CD8-positive, alpha-beta memory T cell (primary cell): ENCODE measurements at regions of chr7 and their contacts with region 1.

Region 1: GRCh38 chr7:25186436-25186835 is 41.9 kb downstream of the NPVF start:
- DNase-seq: no peak
- H3K4me3 ChIP-seq: no peak overlapping the region
- H3K4me3 Mint-ChIP-seq: no peak overlapping the region
- H3K27ac ChIP-seq: no peak overlapping the region
- H3K27ac Mint-ChIP-seq: no peak overlapping the region
- H3K4me1 ChIP-seq: no peaks in the 10 kb centered on the region
- H3K4me1 Mint-ChIP-seq: peaks cover 0 to 1% (median under 1%) of the 10 kb centered on the region in 3 donors
- H3K27me3 ChIP-seq: no peaks in the 10 kb centered on the region
- H3K27me3 Mint-ChIP-seq: peaks cover 4 to 49% of the 10 kb centered on the region in 2 donors

Region 2: DNA sequence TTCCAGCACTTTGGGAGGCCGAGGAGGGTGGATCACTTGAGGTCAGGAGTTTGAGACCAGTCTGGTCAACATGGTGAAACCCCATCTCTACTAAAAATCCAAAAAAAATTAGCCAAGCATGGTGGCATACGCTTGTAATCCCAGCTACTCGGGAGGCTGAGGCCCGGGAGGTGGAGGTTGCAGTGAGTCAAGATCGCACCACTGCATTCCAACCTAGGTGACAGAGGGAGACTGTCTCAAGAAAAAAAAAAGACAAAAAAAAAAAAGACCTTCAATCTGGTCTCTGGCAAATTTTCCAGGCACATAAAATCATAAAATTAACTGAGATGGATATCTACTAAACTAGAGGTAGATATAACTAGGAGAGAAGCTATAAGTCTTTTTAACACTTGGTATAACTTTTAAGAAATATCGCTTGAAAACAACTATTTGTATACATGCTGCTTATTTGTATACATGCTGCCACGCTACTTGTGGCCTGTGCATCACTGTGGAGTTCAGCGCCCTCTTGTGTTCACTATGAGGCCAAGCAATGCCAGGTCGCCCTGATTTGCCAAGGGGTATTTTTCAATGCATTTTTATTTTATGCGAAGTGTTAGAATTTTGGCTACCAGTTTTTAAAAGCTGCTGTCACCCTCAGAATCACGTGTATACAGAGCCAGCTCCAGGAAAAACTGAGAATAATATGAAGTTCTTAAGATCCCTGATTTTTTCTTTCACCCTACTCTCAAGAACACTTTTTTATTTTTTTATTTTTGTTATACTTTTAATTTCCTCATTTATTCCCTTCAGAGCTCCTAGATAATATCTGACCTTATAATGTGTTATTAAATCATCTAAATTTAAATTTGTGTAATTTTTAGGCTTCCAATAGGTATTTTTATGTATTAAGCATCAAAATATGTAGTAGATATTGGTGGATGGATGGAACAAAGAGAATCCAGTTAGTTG is 88.1 kb before region 1 on chr7:
- CTCF ChIA-PET with region 1: no interaction called
- POLR2A ChIA-PET with region 1: no interaction called
- DNase-seq: peak; percentile 39 to 73 (median 42)
- H3K4me3 ChIP-seq: no peak overlapping the region
- H3K4me3 Mint-ChIP-seq: no peak overlapping the region
- H3K27ac ChIP-seq: no peak overlapping the region
- H3K27ac Mint-ChIP-seq: no peak overlapping the region
- H3K4me1 ChIP-seq: no peaks in the 10 kb centered on the region
- H3K4me1 Mint-ChIP-seq: peaks cover 4 to 8% (median 6%) of the 10 kb centered on the region in 3 donors
- H3K27me3 ChIP-seq: peaks cover 3% of the 10 kb centered on the region
- H3K27me3 Mint-ChIP-seq: peaks cover 1 to 4% of the 10 kb centered on the region in 2 donors

Region 3: DNA sequence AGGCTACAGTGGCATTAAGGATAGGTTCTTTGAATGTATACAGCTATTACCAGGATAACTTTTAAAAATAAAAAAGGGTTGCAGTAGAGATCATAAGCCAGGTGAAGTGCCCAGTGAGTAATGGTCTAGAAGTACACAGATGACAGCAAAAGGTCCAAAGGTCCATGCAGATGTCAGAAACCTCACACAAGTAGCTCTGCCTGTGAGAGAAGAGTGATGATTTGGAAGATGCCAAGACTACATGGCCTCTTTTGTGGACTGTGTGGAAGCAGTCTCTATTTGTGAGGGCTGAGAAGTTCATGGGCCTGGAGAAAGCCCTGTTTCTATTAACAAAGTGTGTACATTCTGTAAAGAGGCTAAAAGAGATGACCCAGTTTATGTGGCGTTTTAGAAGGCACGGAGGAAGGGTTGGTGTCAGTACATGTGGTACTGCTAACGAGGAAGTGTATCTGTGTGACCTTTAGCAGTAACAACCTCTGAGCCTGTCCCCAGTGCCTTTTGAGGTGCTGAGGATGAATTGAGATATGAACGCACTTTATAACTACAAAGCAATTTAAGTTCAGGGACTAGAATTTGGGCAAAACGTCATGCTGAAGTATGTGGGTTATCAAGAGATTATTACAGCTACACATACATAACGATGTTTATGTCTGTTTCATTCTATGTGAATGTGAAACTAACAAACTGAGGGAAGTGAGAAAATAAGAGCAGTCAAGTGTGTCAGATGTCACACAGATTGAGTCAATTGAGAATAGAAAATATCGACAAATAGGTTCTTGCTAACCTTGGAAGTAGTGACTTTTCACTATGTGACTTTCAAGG is 69.0 kb before region 1 on chr7:
- CTCF ChIA-PET with region 1: no interaction called
- POLR2A ChIA-PET with region 1: interaction called, 11 read pairs
- DNase-seq: peak in 1 of 5 donors; percentile 27
- H3K4me3 ChIP-seq: no peak overlapping the region
- H3K4me3 Mint-ChIP-seq: peak overlapping the region; percentile 15 to 75 (median 60)
- H3K27ac ChIP-seq: no peak overlapping the region
- H3K27ac Mint-ChIP-seq: peak overlapping the region; percentile 14 to 93 (median 84)
- H3K4me1 ChIP-seq: peaks cover 7% of the 10 kb centered on the region
- H3K4me1 Mint-ChIP-seq: peaks cover 23 to 35% (median 32%) of the 10 kb centered on the region in 3 donors
- H3K27me3 ChIP-seq: no peaks in the 10 kb centered on the region
- H3K27me3 Mint-ChIP-seq: no peaks in the 10 kb centered on the region

Region 4: GRCh38 chr7:25171071-25171470 is 15.4 kb before region 1 on chr7:
- CTCF ChIA-PET with region 1: no interaction called
- POLR2A ChIA-PET with region 1: no interaction called
- DNase-seq: no peak
- H3K4me3 ChIP-seq: no peak overlapping the region
- H3K4me3 Mint-ChIP-seq: no peak overlapping the region
- H3K27ac ChIP-seq: no peak overlapping the region
- H3K27ac Mint-ChIP-seq: no peak overlapping the region
- H3K4me1 ChIP-seq: no peaks in the 10 kb centered on the region
- H3K4me1 Mint-ChIP-seq: no peaks in the 10 kb centered on the region
- H3K27me3 ChIP-seq: no peaks in the 10 kb centered on the region
- H3K27me3 Mint-ChIP-seq: no peaks in the 10 kb centered on the region